ENCODE measurements at regions of chr10 and their contacts with region 1.

Region 1: GRCh38 chr10:84537447-84537931 is 209.1 kb downstream of the CCSER2 start:
- DNase-seq: peak; percentile 52
- ATAC-seq: peak; percentile 74
- H3K4me3 Mint-ChIP-seq: no peak overlapping the region
- H3K27ac Mint-ChIP-seq: no peak overlapping the region
- H3K4me1 Mint-ChIP-seq: peaks cover 13% of the 10 kb centered on the region
- H3K27me3 Mint-ChIP-seq: peaks cover 16% of the 10 kb centered on the region
- CTCF ChIP-seq: peak; percentile 75

Region 2: DNA sequence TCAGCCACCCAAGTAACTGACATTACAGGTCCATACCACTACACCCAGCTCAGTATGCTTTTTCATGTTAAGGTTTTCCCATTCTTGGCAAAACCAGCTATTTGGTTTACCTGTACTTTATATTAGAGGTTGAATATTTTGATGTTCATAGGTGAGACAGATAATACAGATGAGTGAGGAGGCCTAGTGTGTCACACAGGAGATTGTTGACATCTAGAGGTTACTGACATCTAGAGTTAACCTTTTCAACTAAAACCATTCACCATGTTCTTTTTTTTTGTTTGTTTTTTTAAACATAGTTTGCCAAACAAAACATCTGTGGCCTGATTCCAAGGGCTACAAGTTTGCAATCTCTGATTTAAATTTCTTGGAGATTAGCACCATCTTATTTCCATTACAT is 390.1 kb before region 1 on chr10:
- CTCF ChIA-PET with region 1: interaction called, 11 read pairs
- POLR2A ChIA-PET with region 1: no interaction called
- intact Hi-C with region 1: no loop called
- DNase-seq: no peak
- ATAC-seq: no peak
- H3K4me3 Mint-ChIP-seq: no peak overlapping the region
- H3K27ac Mint-ChIP-seq: no peak overlapping the region
- H3K4me1 Mint-ChIP-seq: peaks cover 24% of the 10 kb centered on the region
- H3K27me3 Mint-ChIP-seq: no peaks in the 10 kb centered on the region
- CTCF ChIP-seq: no peak

Region 3: DNA sequence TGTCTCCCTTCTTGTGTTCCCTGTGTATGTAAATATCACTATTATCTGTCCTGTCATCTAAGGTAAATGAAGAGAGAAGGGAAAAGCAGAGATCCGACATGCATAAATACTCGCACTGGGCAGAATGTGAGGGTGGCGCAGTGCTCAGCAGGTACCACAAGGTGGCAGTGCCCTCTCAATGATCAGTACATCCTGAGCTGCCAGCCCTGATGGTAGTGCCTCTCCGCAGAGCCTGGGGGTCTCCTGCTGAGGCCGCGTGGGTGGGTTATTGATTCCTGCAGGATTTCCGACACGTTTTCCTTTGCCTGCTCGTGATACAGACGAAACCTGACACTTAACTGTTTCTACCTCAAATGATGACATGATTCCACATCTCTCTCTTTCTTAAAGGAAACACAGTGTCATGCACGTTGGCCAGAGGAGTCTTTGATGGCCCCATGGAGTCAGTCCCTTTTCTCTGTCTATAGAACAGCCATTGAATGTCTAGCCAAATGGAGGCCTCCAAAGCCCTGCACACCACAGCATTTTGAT is 272.8 kb before region 1 on chr10:
- CTCF ChIA-PET with region 1: interaction called, 282 read pairs
- POLR2A ChIA-PET with region 1: no interaction called
- intact Hi-C with region 1: loop called (anchors 2 kb)
- DNase-seq: peak; percentile 85
- ATAC-seq: peak; percentile 94
- H3K4me3 Mint-ChIP-seq: no peak overlapping the region
- H3K27ac Mint-ChIP-seq: no peak overlapping the region
- H3K4me1 Mint-ChIP-seq: peaks cover 15% of the 10 kb centered on the region
- H3K27me3 Mint-ChIP-seq: peaks cover 24% of the 10 kb centered on the region
- CTCF ChIP-seq: peak; percentile 97

Region 4: GRCh38 chr10:84341538-84341856 is 196.0 kb before region 1 on chr10:
- CTCF ChIA-PET with region 1: interaction called, 21 read pairs
- POLR2A ChIA-PET with region 1: no interaction called
- intact Hi-C with region 1: no loop called
- DNase-seq: peak; percentile 52
- ATAC-seq: no peak
- H3K4me3 Mint-ChIP-seq: no peak overlapping the region
- H3K27ac Mint-ChIP-seq: peak overlapping the region; percentile 76
- H3K4me1 Mint-ChIP-seq: peaks cover 58% of the 10 kb centered on the region
- H3K27me3 Mint-ChIP-seq: no peaks in the 10 kb centered on the region
- CTCF ChIP-seq: no peak

Region 5: DNA sequence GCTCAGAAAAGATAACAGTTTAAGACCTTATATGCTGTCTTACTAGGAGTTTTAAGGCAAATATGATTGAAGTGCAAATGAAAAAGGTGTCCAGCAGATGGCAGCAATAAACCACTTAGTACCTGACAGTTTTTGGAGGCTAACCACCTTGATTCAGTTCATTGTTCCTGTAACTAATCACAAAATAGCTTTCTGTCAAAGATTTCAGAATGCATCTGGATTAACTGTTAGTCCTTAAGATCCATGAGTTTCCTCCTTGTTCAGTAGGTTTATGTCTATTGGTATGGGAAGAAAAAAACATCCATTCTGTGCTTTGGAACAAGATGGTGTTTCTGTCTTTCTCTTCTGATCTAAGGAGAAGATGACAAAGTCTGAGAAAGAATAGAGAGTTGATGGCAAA is 162.5 kb before region 1 on chr10:
- CTCF ChIA-PET with region 1: interaction called, 100 read pairs
- POLR2A ChIA-PET with region 1: interaction called, 3 read pairs
- intact Hi-C with region 1: loop called (anchors 1 kb)
- DNase-seq: peak; percentile 61
- ATAC-seq: peak; percentile 62
- H3K4me3 Mint-ChIP-seq: no peak overlapping the region
- H3K27ac Mint-ChIP-seq: no peak overlapping the region
- H3K4me1 Mint-ChIP-seq: peaks cover 43% of the 10 kb centered on the region
- H3K27me3 Mint-ChIP-seq: no peaks in the 10 kb centered on the region
- CTCF ChIP-seq: peak; percentile 85

Region 6: GRCh38 chr10:84510121-84510520 is 27.4 kb before region 1 on chr10:
- CTCF ChIA-PET with region 1: interaction called, 16 read pairs
- POLR2A ChIA-PET with region 1: no interaction called
- intact Hi-C with region 1: no loop called
- DNase-seq: no peak
- ATAC-seq: no peak
- H3K4me3 Mint-ChIP-seq: no peak overlapping the region
- H3K27ac Mint-ChIP-seq: no peak overlapping the region
- H3K4me1 Mint-ChIP-seq: no peaks in the 10 kb centered on the region
- H3K27me3 Mint-ChIP-seq: no peaks in the 10 kb centered on the region
- CTCF ChIP-seq: no peak

Region 7: GRCh38 chr10:84715911-84716310 is 178.4 kb after region 1 on chr10:
- CTCF ChIA-PET with region 1: interaction called, 20 read pairs
- POLR2A ChIA-PET with region 1: no interaction called
- intact Hi-C with region 1: no loop called
- DNase-seq: peak; percentile 20
- ATAC-seq: peak; percentile 34
- H3K4me3 Mint-ChIP-seq: no peak overlapping the region
- H3K27ac Mint-ChIP-seq: no peak overlapping the region
- H3K4me1 Mint-ChIP-seq: no peaks in the 10 kb centered on the region
- H3K27me3 Mint-ChIP-seq: peaks cover 7% of the 10 kb centered on the region
- CTCF ChIP-seq: peak; percentile 26

Measured in activated CD8-positive, alpha-beta T cell treated with anti-CD3 and anti-CD28 coated beads for 36 hours (primary cell).